ENCODE measurements at regions of chr18 and their contacts with region 1.

Region 1: GRCh38 chr18:3665780-3666525 is 216.0 kb downstream of the TGIF1 start:
- DNase-seq: peak; percentile 68 to 88
- H3K4me3 ChIP-seq: peak overlapping the region; percentile 16 to 33
- H3K27ac ChIP-seq: peak overlapping the region; percentile 31 to 37
- H3K4me1 ChIP-seq: peaks cover 0 to 6% (median 4%) of the 10 kb centered on the region in 4 donors
- H3K27me3 ChIP-seq: no peaks in the 10 kb centered on the region
- CTCF ChIP-seq: peak; percentile 91 to 96

Region 2: GRCh38 chr18:3281456-3282400 is 384.2 kb before region 1 on chr18:
- intact Hi-C with region 1: loop called (anchors 2 kb)
- DNase-seq: no peak
- H3K4me3 ChIP-seq: no peak overlapping the region
- H3K27ac ChIP-seq: no peak overlapping the region
- H3K4me1 ChIP-seq: no peaks in the 10 kb centered on the region
- H3K27me3 ChIP-seq: no peaks in the 10 kb centered on the region
- CTCF ChIP-seq: peak; percentile 64 to 84

Region 3: DNA sequence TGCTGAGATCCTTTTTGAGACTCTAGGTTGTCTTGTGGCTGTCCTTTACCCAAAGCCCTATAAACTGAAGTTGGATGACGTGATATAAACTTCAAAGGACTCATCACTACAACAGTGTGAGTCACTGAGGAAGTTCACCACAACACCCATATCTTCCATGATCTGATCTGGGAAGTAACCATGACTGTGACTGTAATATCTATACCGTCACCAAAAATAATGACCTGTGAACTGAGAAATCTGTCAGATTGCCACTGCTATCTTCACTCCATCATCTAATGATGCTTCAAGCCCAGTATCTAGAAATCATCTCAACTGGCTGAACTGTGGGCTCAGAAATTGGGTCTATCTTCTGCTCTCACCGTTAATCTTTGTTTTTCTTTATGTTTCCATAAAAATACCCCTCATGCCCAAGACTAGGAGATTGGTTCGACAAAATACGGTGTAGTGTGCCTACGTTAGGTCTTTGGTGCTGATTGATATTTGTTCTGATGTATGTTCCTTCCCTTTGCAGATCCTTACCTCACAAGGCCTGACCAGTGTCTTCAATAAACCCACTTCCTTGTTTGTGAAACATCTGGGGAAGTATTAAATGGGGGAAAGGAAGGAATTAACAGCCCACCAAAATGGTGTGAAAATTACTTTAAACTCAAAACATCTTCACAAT is 325.8 kb before region 1 on chr18:
- intact Hi-C with region 1: no loop called
- DNase-seq: no peak
- H3K4me3 ChIP-seq: no peak overlapping the region
- H3K27ac ChIP-seq: no peak overlapping the region
- H3K4me1 ChIP-seq: no peaks in the 10 kb centered on the region
- H3K27me3 ChIP-seq: no peaks in the 10 kb centered on the region
- CTCF ChIP-seq: no peak

Region 4: DNA sequence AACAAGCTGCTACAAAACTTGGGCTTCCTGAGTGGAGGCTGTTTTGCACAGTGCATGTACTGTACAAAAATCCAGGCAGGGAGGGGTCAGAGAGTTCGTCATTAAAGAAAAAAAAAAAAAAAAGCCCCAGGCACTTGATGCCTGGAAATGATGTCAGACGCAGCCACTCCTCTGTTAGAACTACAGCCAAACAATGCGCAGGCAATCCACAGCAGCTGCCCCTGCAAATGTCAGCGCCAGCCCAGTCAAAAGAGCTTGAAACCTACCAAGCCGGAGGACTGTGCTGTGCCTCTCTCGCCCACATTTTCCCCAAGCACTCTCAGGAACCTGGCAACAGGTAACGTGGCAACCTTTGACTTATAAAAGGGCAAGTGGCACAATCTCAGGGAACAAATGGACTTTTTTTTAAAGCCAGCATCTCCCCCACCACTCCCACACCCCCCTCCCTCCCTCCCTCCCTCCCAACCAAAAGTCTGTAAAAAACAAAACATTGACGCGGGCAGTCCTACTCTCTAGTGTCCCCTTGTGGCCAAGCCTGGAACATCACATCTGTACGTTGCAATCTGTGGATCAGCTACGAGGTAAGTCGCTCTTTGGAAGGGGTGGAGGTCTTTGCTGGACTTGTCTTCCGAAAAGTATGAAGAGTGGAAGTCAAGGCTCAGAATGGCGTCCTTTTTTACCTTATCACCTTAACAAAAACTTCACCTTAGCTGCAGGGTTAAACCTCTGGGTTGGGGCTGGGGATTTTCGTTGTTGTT is 71.9 kb before region 1 on chr18:
- intact Hi-C with region 1: loop called (anchors 10 kb)
- DNase-seq: peak; percentile 90 to 93
- H3K4me3 ChIP-seq: peak overlapping the region; percentile 47 to 57
- H3K27ac ChIP-seq: peak overlapping the region; percentile 88 to 90
- H3K4me1 ChIP-seq: peaks cover 0 to 50% (median 42%) of the 10 kb centered on the region in 4 donors
- H3K27me3 ChIP-seq: no peaks in the 10 kb centered on the region
- CTCF ChIP-seq: peak; percentile 83 to 92

Region 5: GRCh38 chr18:3624818-3625716 is 40.9 kb before region 1 on chr18:
- intact Hi-C with region 1: loop called (anchors 5 kb)
- DNase-seq: peak in 1 of 2 donors; percentile 72
- H3K4me3 ChIP-seq: no peak overlapping the region
- H3K27ac ChIP-seq: peak overlapping the region; percentile 79 to 88
- H3K4me1 ChIP-seq: peaks cover 5 to 43% (median 26%) of the 10 kb centered on the region in 4 donors
- H3K27me3 ChIP-seq: no peaks in the 10 kb centered on the region
- CTCF ChIP-seq: no peak

Region 6: GRCh38 chr18:3771121-3771971 is 105.4 kb after region 1 on chr18:
- intact Hi-C with region 1: no loop called
- DNase-seq: peak; percentile 84 to 91
- H3K4me3 ChIP-seq: peak overlapping the region; percentile 29 to 48
- H3K27ac ChIP-seq: peak overlapping the region; percentile 64 to 71
- H3K4me1 ChIP-seq: peaks cover 0 to 13% (median 9%) of the 10 kb centered on the region in 4 donors
- H3K27me3 ChIP-seq: no peaks in the 10 kb centered on the region
- CTCF ChIP-seq: peak; percentile 98